Activated T-helper 2 cell treated with anti-CD3 and anti-CD28 coated beads, Interferon-gamma antibody, Interleukin-2, Interleukin-4, amounts not matched to agents 10 μg/mL and 5 μg/mL and 100 μg/mL, durations not matched to agents 14 hours and 24 hours and 36 hours (primary cell): ENCODE measurements at regions of chr11 and their contacts with region 1.

Region 1: GRCh38 chr11:96012086-96012824 is 88.3 kb upstream of the MTMR2 start:
- DNase-seq: peak; percentile 34
- H3K4me3 Mint-ChIP-seq: peak overlapping the region; percentile 21
- H3K27ac Mint-ChIP-seq: peak overlapping the region; percentile 71
- H3K4me1 Mint-ChIP-seq: peaks cover 49% of the 10 kb centered on the region
- H3K27me3 Mint-ChIP-seq: no peaks in the 10 kb centered on the region

Region 2: DNA sequence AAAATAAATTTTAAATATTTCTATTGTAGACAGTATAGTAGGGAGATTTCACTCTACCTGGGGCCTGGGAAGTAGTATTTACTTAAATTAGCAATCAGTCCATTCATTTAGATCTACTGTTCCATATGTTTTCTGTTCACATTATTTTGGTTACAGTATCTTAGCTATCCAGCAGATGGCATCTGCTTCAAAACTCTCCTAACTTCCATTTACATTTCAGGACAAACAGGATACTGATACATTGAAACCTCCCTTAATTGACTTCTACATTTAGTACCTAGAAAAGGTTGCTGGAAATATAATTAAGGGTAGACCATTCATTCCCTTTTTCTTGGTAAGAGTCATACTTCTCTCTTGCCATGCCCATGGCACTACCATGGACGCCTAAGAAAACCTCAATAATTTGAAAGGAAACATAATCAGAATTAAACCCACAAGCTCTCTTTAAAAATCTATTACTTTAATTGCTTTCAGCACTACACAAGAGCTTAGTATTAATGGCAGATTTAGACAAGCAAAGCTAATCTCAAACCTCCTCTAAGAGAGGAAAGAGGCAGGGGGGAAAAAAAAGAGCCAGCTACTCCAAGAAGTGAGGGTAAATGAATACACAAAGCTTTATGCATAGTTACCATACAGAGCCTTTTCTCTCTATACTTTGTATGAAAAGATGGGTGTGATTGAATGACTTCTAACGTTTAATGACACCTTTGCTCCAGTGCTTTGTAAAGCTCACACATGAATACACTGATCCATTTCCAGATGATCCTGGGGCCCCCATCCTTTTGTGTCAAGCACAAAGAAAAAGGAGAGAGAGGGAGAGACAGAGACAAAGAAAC is 42.8 kb after region 1 on chr11:
- intact Hi-C with region 1: loop called (anchors 2 kb)
- DNase-seq: no peak
- H3K4me3 Mint-ChIP-seq: no peak overlapping the region
- H3K27ac Mint-ChIP-seq: no peak overlapping the region
- H3K4me1 Mint-ChIP-seq: peaks cover 53% of the 10 kb centered on the region
- H3K27me3 Mint-ChIP-seq: no peaks in the 10 kb centered on the region

Region 3: GRCh38 chr11:96155627-96156378 is 143.5 kb after region 1 on chr11:
- intact Hi-C with region 1: loop called (anchors 1 kb)
- DNase-seq: peak; percentile 25
- H3K4me3 Mint-ChIP-seq: peak overlapping the region; percentile 43
- H3K27ac Mint-ChIP-seq: peak overlapping the region; percentile 96
- H3K4me1 Mint-ChIP-seq: peaks cover 49% of the 10 kb centered on the region
- H3K27me3 Mint-ChIP-seq: no peaks in the 10 kb centered on the region

Region 4: DNA sequence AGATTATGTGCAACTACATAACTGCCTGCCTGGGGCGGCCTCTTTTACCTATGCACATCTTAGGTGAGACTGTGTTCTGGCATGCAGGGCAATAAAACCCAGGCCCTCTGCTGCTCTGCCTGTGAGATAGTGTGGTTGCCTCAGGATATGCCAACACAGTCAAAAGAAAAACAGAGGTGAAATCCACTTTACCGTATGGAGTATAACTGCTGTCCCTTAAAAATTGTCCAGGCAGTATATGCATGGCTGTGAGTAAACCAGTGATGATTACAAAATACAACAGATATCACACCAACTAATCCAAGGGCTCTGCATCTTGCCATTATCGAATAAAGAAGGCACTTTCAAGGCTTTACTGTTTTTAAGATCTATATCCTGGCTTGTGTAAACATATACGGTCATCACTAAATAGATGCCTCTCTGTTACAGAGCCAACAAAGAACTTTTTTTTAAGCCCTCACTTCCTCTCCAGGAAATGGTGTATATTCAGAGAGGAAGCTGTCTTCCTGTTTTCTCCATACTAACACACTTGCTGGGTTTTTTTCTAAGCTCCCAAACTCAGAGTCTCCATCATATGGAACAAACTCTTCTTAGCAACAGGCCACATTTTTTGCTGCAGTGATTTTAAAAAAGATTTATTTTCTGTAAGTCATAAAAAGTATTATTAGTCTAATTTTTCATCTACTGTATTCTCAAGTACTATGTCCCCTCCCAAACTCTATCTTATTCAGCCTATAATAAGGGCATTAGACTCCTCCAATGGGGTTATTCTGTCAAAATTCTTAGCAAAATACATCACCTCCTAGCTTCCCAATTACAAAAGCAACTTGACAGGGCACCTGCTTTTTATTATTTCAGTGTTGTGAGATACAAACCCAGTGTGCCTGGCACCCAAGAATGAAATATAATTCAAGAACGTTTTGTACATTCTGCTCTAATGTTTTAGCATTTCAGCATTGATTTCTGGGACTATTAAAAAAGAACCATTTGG is 195.5 kb after region 1 on chr11:
- intact Hi-C with region 1: loop called (anchors 5 kb)
- DNase-seq: no peak
- H3K4me3 Mint-ChIP-seq: peak overlapping the region; percentile 48
- H3K27ac Mint-ChIP-seq: peak overlapping the region; percentile 85
- H3K4me1 Mint-ChIP-seq: peaks cover 76% of the 10 kb centered on the region
- H3K27me3 Mint-ChIP-seq: no peaks in the 10 kb centered on the region

Region 5: DNA sequence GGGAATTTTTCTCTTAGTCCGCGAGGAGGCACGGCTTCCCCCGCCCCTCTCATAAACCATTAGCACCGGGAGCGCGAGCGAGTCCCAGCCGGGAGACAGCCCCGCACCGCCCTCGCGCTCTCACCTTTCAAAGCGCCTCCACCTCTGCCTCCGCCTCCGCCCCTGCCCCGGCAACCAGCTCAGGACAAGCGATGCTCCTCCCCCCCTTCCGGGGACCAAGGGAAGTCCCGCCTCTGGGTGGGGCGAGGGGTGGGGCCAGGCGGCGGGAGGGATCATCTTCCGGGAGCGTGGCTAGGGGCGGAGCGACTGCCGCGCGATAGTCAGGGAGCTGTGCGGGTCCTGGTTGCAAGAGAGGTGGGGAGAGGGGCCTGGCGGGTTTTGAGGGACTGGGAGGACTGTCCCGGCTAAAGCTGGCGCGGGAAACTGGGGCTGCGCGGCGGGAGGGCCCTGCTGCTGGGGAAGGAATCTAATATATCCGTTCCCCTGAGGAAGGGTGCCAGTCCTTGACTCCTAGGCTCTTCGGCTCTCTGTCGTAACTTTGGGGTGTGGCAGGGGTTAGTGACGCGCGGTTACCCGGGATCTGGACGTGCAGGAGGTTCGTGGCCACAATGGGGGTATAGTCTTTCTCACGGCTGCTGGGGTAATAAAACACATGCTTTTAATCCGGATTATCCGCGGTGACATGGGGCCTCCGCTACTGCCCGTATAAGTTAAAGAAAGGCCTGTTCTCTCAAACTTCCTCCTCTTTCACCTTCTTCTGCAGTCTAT is 377.6 kb after region 1 on chr11 and contains the starts of genes CCDC82 and JRKL:
- intact Hi-C with region 1: loop called (anchors 2 kb)
- DNase-seq: peak; percentile 96
- H3K4me3 Mint-ChIP-seq: peak within 1 kb of the TSS; percentile 94
- H3K27ac Mint-ChIP-seq: peak within 1 kb of the TSS; percentile 86
- H3K4me1 Mint-ChIP-seq: peaks cover 50% of the 10 kb centered on the region
- H3K27me3 Mint-ChIP-seq: no peaks in the 10 kb centered on the region
- total RNA-seq, gene CCDC82: 35.4 and 38.6 TPM in 2 replicates
- total RNA-seq, gene JRKL: 11.8 and 12.9 TPM in 2 replicates